ENCODE measurements at regions of chr6 and their contacts with region 1.

Region 1: GRCh38 chr6:44002593-44003344 is 124.5 kb downstream of the MRPL14 start:
- DNase-seq: peak; percentile 84 to 86
- H3K4me3 ChIP-seq: peak overlapping the region; percentile 49
- H3K4me3 Mint-ChIP-seq: peak overlapping the region; percentile 66
- H3K27ac Mint-ChIP-seq: peak overlapping the region; percentile 75
- H3K4me1 ChIP-seq: peaks cover 21% of the 10 kb centered on the region
- H3K4me1 Mint-ChIP-seq: no peaks in the 10 kb centered on the region
- H3K27me3 ChIP-seq: no peaks in the 10 kb centered on the region
- H3K27me3 Mint-ChIP-seq: no peaks in the 10 kb centered on the region
- CTCF ChIP-seq: peak; percentile 15 to 52

Region 2: GRCh38 chr6:44041461-44042260 is 38.9 kb after region 1 on chr6:
- CTCF ChIA-PET with region 1: no interaction called
- POLR2A ChIA-PET with region 1: no interaction called
- intact Hi-C with region 1: loop called (anchors 5 kb)
- DNase-seq: peak in 1 of 2 experiments; percentile 57
- H3K4me3 ChIP-seq: no peak overlapping the region
- H3K4me3 Mint-ChIP-seq: no peak overlapping the region
- H3K27ac Mint-ChIP-seq: no peak overlapping the region
- H3K4me1 ChIP-seq: peaks cover 28% of the 10 kb centered on the region
- H3K4me1 Mint-ChIP-seq: peaks cover under 1% of the 10 kb centered on the region
- H3K27me3 ChIP-seq: no peaks in the 10 kb centered on the region
- H3K27me3 Mint-ChIP-seq: no peaks in the 10 kb centered on the region
- CTCF ChIP-seq: no peak

Region 3: DNA sequence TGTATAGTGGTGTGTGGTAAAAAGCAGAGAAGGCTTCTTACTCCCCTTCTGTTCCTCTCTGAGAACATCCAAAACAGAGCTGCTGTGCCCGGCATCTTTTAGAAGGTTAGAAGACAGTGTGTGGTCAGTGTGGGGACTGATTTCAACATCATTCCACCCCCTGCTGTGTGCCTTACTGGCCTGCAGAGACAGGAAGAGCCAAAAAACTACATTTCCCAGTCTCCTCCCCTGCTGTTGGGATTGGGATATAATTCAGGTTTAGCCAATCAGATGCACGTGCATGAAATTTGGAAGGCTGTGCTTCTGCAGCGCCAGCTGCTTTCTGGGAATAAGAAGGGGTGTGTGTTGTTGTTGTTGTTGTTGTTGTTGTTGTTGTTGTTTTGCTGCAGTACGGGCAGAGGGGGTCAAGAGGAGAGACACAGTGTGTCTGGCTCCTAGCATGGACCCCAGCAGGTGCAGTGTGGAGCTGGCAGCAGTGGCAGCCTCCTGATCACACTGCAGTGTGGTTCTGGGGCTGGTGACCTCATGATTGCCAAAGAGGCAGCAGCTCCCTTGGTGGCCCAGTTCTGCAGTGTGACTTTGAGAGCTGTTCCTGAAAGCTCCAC is 49.8 kb after region 1 on chr6:
- CTCF ChIA-PET with region 1: no interaction called
- POLR2A ChIA-PET with region 1: no interaction called
- intact Hi-C with region 1: no loop called
- DNase-seq: peak in 1 of 2 experiments; percentile 14
- H3K4me3 ChIP-seq: no peak overlapping the region
- H3K4me3 Mint-ChIP-seq: no peak overlapping the region
- H3K27ac Mint-ChIP-seq: no peak overlapping the region
- H3K4me1 ChIP-seq: peaks cover 7% of the 10 kb centered on the region
- H3K4me1 Mint-ChIP-seq: peaks cover 6% of the 10 kb centered on the region
- H3K27me3 ChIP-seq: no peaks in the 10 kb centered on the region
- H3K27me3 Mint-ChIP-seq: no peaks in the 10 kb centered on the region
- CTCF ChIP-seq: no peak

Region 4: DNA sequence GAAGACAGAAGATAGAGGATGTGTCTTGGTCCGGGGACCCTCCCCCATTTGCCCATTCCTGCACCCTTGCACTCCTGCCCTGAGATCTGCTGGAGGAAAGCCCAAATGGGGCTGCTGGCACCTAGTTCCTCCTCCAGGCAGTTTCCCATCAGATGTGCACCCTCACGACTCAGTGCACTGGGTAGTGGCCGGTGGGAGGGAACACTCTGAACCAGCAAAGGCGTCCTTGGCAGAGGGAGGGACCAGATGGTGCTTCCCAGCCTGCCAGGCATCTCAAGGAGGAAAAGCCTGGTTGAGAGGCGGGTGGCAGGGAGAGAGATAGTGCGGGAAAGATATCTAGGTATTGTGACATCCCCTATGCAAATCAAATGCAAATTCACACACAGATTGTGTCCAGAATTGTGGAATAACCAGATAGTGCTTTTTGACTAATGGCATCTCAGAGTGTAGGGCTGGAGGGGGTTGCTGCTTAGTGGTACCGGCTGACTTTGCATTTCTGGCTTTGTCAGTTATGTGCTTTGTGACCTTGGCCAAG is 287.0 kb after region 1 on chr6:
- CTCF ChIA-PET with region 1: no interaction called
- POLR2A ChIA-PET with region 1: no interaction called
- intact Hi-C with region 1: no loop called
- DNase-seq: no peak
- H3K4me3 ChIP-seq: no peak overlapping the region
- H3K4me3 Mint-ChIP-seq: no peak overlapping the region
- H3K27ac Mint-ChIP-seq: no peak overlapping the region
- H3K4me1 ChIP-seq: no peaks in the 10 kb centered on the region
- H3K4me1 Mint-ChIP-seq: no peaks in the 10 kb centered on the region
- H3K27me3 ChIP-seq: no peaks in the 10 kb centered on the region; the same call in none of the 2 replicates
- H3K27me3 Mint-ChIP-seq: peaks cover 35% of the 10 kb centered on the region
- CTCF ChIP-seq: no peak

Region 5: DNA sequence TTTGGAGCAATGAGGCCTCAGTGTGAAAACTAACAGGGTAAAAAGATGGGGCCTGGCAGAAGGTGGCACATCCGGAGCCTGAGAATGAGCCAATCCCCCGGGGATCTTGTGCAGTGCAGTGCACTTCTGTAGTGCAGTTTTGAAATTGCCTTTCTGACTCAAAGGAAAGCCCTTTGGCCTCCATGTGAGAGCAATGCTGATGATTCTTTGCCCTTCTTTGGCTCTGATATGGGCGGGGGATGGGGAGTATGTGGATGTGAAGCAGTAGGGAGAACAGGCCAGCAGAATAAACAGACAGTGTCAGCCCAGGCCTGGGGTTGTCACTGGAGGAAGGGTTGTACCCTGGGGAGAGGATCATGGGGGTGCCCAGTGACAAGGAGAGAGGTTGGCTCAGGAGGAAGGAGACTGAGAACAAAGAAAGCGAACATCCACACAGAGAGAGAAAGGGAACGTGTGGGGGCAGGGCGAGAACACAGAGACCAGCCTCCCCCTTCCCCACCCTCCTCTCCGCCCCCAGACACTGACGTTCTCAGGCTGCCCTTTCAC is 735.9 kb after region 1 on chr6:
- CTCF ChIA-PET with region 1: no interaction called
- POLR2A ChIA-PET with region 1: no interaction called
- intact Hi-C with region 1: no loop called
- DNase-seq: peak in 1 of 2 experiments; percentile 43
- H3K4me3 ChIP-seq: no peak overlapping the region
- H3K4me3 Mint-ChIP-seq: no peak overlapping the region
- H3K27ac Mint-ChIP-seq: no peak overlapping the region
- H3K4me1 ChIP-seq: no peaks in the 10 kb centered on the region
- H3K4me1 Mint-ChIP-seq: peaks cover 7% of the 10 kb centered on the region
- H3K27me3 ChIP-seq: no peaks in the 10 kb centered on the region
- H3K27me3 Mint-ChIP-seq: no peaks in the 10 kb centered on the region
- CTCF ChIP-seq: no peak